ENCODE measurements at regions of chr12 and their contacts with region 1.

Region 1: DNA sequence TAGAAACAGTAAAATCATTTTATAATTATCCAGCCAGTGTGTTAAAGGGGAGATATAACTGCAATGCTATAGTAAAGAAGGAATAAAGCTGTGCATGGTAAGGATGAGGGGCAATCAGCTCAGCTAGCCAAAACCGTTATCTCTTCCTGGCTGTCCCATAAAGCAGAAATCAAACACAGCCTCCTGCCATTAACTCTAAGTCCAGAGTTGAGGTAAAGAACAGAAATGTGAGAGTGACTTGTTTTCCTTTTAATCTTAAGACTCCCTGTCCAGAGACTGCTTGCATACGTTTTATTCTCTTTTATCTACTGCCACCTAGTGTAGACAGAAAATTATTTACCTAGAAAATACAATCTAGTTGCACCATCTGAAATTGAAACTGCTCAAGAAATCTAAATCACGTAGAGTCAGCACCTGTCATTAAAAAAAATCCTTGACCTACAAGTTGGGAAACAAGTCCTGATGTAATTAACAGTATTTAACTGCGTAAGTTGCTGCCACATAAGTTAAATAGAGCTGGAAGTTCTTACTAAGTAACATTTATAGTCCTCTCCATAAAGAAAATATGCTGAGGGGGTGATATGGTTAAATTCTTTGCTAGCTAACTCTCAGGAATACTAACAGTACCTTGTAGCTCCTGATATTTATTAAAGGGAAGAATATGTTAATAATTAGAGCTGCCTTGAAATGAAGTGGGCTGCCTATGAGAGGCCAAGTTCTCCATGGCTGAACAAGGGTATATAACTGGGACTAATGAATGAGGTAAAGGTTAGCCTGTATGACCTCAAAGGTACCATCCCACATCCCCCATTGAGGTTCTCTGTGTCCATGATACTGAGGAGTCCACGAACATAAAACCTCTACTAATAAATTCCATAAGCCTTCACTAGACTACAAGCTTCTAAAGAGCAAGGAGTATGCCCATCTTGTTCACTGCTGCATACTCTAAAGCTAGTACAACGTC is 62.7 kb downstream of the GALNT4 start:
- DNase-seq: no peak
- H3K4me3 Mint-ChIP-seq: peak overlapping the region; percentile 35
- H3K27ac Mint-ChIP-seq: peak overlapping the region; percentile 60
- H3K4me1 Mint-ChIP-seq: peaks cover 13% of the 10 kb centered on the region
- H3K27me3 Mint-ChIP-seq: no peaks in the 10 kb centered on the region

Region 2: GRCh38 chr12:89051065-89051677 is 410.8 kb before region 1 on chr12:
- CTCF ChIA-PET with region 1: interaction called, 45 read pairs
- POLR2A ChIA-PET with region 1: no interaction called
- intact Hi-C with region 1: loop called (anchors 1 kb)
- DNase-seq: no peak
- H3K4me3 Mint-ChIP-seq: no peak overlapping the region
- H3K27ac Mint-ChIP-seq: no peak overlapping the region
- H3K4me1 Mint-ChIP-seq: peaks cover 13% of the 10 kb centered on the region
- H3K27me3 Mint-ChIP-seq: no peaks in the 10 kb centered on the region

Region 3: DNA sequence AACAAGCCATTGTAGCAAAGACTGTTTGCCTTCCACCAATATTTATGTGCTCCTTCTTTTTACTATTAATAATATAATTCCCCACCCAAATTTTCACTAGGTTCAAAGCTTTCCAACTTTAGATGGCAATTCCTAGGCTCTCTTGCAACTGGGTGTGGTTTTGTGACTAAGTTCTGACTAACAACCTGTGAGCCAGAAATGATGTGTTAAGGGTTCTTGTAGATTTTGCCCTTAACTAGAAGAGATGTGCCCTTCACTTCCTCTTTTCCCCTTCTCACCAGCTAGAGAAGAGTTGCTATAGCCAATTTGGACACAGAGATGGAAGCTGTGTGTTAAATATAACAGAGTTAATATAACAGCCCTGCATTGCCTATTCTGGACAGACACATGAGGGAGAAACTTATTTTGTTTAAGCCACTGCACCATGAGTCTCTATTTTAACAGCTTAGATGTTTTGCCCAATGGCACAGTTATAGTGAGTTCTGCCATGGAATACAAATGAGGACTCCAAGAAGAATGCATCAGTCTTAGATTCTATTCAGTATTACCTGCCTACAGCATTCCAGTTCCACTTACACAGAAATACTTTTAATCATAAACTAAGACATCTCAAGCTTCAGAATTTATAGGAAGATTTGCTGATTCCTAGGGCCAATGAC is 325.8 kb before region 1 on chr12:
- CTCF ChIA-PET with region 1: interaction called, 3 read pairs
- POLR2A ChIA-PET with region 1: no interaction called
- intact Hi-C with region 1: loop called (anchors 5 kb)
- DNase-seq: no peak
- H3K4me3 Mint-ChIP-seq: no peak overlapping the region
- H3K27ac Mint-ChIP-seq: no peak overlapping the region
- H3K4me1 Mint-ChIP-seq: peaks cover 31% of the 10 kb centered on the region
- H3K27me3 Mint-ChIP-seq: no peaks in the 10 kb centered on the region

Region 4: DNA sequence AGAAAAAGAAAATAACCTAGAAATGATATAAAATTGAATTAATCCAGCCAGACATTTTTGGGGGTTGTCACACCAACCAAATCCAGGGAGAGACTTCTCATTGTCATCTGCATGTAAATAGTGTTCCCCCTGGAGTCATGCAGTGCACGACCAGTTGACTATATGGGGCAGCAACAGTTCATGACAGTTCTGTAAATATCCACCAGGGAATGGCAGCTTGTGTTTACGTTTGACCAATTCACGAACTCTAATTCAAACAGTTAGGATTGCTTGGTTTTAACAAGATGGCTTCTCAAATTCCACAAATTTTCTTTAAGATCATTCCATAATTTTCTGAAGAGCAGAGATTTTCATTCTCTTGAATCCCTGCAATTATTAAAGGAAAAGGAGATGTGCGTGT is 66.2 kb before region 1 on chr12:
- CTCF ChIA-PET with region 1: no interaction called
- POLR2A ChIA-PET with region 1: no interaction called
- intact Hi-C with region 1: loop called (anchors 5 kb)
- DNase-seq: no peak
- H3K4me3 Mint-ChIP-seq: no peak overlapping the region
- H3K27ac Mint-ChIP-seq: no peak overlapping the region
- H3K4me1 Mint-ChIP-seq: peaks cover 28% of the 10 kb centered on the region
- H3K27me3 Mint-ChIP-seq: no peaks in the 10 kb centered on the region

Region 5: GRCh38 chr12:89524541-89525285 is 62.8 kb after region 1 on chr12 and contains the start of gene GALNT4:
- CTCF ChIA-PET with region 1: interaction called, 130 read pairs
- POLR2A ChIA-PET with region 1: no interaction called
- intact Hi-C with region 1: no loop called
- DNase-seq: peak; percentile 86
- H3K4me3 Mint-ChIP-seq: peak within 1 kb of the TSS; percentile 99
- H3K27ac Mint-ChIP-seq: peak within 1 kb of the TSS; percentile 98
- H3K4me1 Mint-ChIP-seq: peaks cover 45% of the 10 kb centered on the region
- H3K27me3 Mint-ChIP-seq: no peaks in the 10 kb centered on the region
- total RNA-seq, gene GALNT4: 5.8 to 6.0 TPM

Measured in activated CD4-positive, alpha-beta memory T cell treated with anti-CD3 and anti-CD28 coated beads for 36 hours (primary cell).